Posterior vena cava (tissue), 2 donors: ENCODE measurements at regions of chr12 and their contacts with region 1.

Region 1: GRCh38 chr12:78418919-78419318 is 445.7 kb upstream of the SYT1 start:
- DNase-seq: no peak

Region 2: GRCh38 chr12:78388461-78388860 is 30.5 kb before region 1 on chr12:
- intact Hi-C with region 1: loop called in 1 of 2 experiments (anchors 2 kb)
- DNase-seq: no peak